Activated naive CD4-positive, alpha-beta T cell treated with anti-CD3 and anti-CD28 coated beads, Interleukin-2, amount 10 ng/mL, durations not matched to agents 7 days and 5 days (primary cell): ENCODE measurements at regions of chr15 and their contacts with region 1.

Region 1: GRCh38 chr15:63466378-63467192 is 37.8 kb upstream of the USP3 start:
- DNase-seq: peak; percentile 65
- H3K4me3 Mint-ChIP-seq: no peak overlapping the region
- H3K27ac Mint-ChIP-seq: peak overlapping the region; percentile 55
- H3K4me1 Mint-ChIP-seq: peaks cover 24% of the 10 kb centered on the region
- H3K27me3 Mint-ChIP-seq: peaks cover 33% of the 10 kb centered on the region

Region 2: GRCh38 chr15:63481105-63481810 is 14.7 kb after region 1 on chr15:
- CTCF ChIA-PET with region 1: interaction called, 14 read pairs
- DNase-seq: no peak
- H3K4me3 Mint-ChIP-seq: no peak overlapping the region
- H3K27ac Mint-ChIP-seq: peak overlapping the region; percentile 98
- H3K4me1 Mint-ChIP-seq: peaks cover 82% of the 10 kb centered on the region
- H3K27me3 Mint-ChIP-seq: no peaks in the 10 kb centered on the region

Region 3: GRCh38 chr15:63497642-63498467 is 31.3 kb after region 1 on chr15:
- CTCF ChIA-PET with region 1: interaction called, 14 read pairs
- DNase-seq: peak; percentile 81
- H3K4me3 Mint-ChIP-seq: no peak overlapping the region
- H3K27ac Mint-ChIP-seq: no peak overlapping the region
- H3K4me1 Mint-ChIP-seq: peaks cover 56% of the 10 kb centered on the region
- H3K27me3 Mint-ChIP-seq: no peaks in the 10 kb centered on the region

Region 4: GRCh38 chr15:63600616-63601025 is 134.0 kb after region 1 on chr15:
- CTCF ChIA-PET with region 1: interaction called, 44 read pairs
- DNase-seq: peak; percentile 92
- H3K4me3 Mint-ChIP-seq: peak overlapping the region; percentile 91
- H3K27ac Mint-ChIP-seq: peak overlapping the region; percentile 97
- H3K4me1 Mint-ChIP-seq: peaks cover 61% of the 10 kb centered on the region
- H3K27me3 Mint-ChIP-seq: peaks cover 11% of the 10 kb centered on the region

Region 5: GRCh38 chr15:64067564-64068030 is 601.0 kb after region 1 on chr15:
- CTCF ChIA-PET with region 1: interaction called, 13 read pairs
- DNase-seq: peak; percentile 78
- H3K4me3 Mint-ChIP-seq: no peak overlapping the region
- H3K27ac Mint-ChIP-seq: no peak overlapping the region
- H3K4me1 Mint-ChIP-seq: peaks cover 15% of the 10 kb centered on the region
- H3K27me3 Mint-ChIP-seq: no peaks in the 10 kb centered on the region